ENCODE measurements at regions of chr2 and their contacts with region 1.

Region 1: GRCh38 chr2:165203689-165204559 is at the start of gene SCN3A:
- DNase-seq: peak; percentile 22
- ATAC-seq: no peak
- H3K4me3 ChIP-seq: no peak within 1 kb of the TSS
- H3K27ac ChIP-seq: no peak within 1 kb of the TSS
- H3K4me1 ChIP-seq: no peaks in the 10 kb centered on the region
- H3K27me3 ChIP-seq: no peaks in the 10 kb centered on the region
- CTCF ChIP-seq: peak; percentile 80
- total RNA-seq, gene SCN3A: not detected

Region 2: DNA sequence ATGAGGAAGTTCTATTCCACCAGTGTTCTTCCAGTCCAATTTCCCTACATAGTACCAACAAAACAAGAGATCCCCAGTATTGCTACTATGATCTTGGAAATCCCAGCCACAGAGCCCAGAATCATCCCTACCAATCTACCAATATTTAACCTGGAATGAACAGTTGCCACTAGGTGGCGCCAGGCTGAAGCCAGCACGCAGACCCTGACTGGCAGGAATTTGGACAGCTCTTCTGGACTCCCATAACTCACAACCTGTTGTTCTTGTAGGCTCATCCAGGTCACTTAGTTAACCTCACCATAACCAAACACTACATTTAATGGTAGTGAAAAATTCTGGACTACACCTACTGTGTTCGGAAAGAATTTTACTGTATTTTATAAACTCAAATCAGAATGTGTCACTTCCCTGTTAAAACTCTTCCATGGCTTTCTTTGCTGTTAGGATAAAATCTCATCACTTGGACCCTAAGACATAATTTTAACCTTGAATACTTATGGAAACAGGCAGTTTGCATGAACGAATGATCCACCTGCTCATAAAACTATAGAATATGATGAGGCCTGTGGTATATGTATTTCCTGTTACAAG is 188.8 kb before region 1 on chr2:
- CTCF ChIA-PET with region 1: interaction called, 11 read pairs
- POLR2A ChIA-PET with region 1: no interaction called
- in situ Hi-C with region 1: no loop called
- intact Hi-C with region 1: loop called (anchors 1 kb)
- DNase-seq: peak; percentile 38
- ATAC-seq: peak; percentile 85
- H3K4me3 ChIP-seq: no peak overlapping the region
- H3K27ac ChIP-seq: no peak overlapping the region
- H3K4me1 ChIP-seq: no peaks in the 10 kb centered on the region
- H3K27me3 ChIP-seq: no peaks in the 10 kb centered on the region
- CTCF ChIP-seq: peak; percentile 94